GM12878 (cell line): ENCODE measurements at regions of chr12 and their contacts with region 1.

Region 1: DNA sequence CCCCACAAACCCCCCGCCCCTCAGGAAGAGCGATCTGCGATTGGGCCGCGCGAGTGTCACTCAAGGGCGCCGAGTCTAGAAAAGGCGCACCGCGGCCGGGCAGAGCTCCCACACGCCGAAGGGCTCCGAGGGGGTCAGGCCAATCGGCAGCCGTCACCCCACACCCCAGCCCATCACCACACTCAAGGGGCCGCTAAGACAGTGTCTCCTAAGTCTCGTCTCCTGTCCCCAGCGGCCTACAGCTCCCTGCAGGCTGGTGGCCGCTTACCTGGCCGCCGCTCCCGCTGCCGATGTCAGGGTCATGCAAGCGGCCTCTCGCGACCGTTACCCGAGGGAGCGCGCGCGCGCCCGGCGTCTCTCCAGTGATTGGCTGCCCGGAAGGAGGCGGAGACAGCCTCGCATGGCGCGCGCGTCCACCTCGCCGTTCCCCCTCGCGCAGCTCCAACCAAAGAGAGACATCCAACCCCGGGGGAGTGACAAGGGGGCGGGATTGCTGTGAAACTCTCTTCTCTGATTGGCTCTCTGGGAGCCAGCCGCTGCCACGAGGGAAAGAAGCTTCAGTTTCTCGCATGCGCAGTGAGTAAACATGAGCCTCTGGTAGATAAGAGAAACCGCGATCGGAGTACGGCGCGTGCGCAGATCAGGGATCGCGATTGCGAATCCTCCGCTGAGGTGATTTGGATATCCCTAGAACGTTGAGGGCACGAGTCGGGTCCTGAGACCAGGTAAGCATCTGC is at the starts of genes MPHOSPH9 and MTRFR:
- DNase-seq: peak; percentile 100
- ATAC-seq: peak; percentile 91
- H3K4me3 ChIP-seq: peak within 1 kb of the TSS; percentile 95
- H3K27ac ChIP-seq: peak within 1 kb of the TSS; percentile 90
- H3K4me1 ChIP-seq: peaks cover 24% of the 10 kb centered on the region
- H3K27me3 ChIP-seq: no peaks in the 10 kb centered on the region
- CTCF ChIP-seq: no peak
- EP300 ChIP-seq: peak in 1 of 2 experiments; percentile 41; a peak in 2 of 4 replicates
- POLR2A ChIP-seq: peak; percentile 99
- RAD21 ChIP-seq: no peak
- polyA plus RNA-seq, gene MPHOSPH9: 11.5 to 13.3 TPM
- polyA plus RNA-seq, gene MTRFR: 30.8 to 33.4 TPM

Region 2: DNA sequence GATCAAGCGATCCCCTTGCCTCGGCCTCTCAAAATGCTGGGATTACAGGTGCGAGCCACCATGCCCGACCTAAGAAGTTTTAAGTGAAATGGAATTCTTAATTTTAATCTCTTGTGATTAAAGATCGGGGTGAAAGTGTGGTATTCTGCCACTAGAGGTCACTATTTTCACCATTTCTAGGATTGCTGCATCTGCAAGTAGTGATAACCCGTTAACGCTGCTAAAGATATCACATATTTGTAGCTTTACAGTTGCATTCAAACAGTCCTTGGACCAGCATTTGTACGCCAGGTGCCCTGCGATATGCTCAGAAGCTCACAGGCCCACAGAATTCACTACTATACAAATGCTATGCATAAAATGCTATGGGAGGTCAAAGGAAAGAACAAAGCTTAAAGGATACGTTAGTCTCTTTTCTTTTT is 439.3 kb before region 1 on chr12:
- CTCF ChIA-PET with region 1: interaction called, 14 read pairs
- POLR2A ChIA-PET with region 1: no interaction called
- RAD21 ChIA-PET with region 1: interaction called, 3 read pairs
- SMC1A ChIA-PET with region 1: interaction called, 4 read pairs
- in situ Hi-C with region 1: no loop called
- intact Hi-C with region 1: no loop called
- DNase-seq: no peak
- ATAC-seq: peak; percentile 88
- H3K4me3 ChIP-seq: no peak overlapping the region
- H3K27ac ChIP-seq: no peak overlapping the region
- H3K4me1 ChIP-seq: no peaks in the 10 kb centered on the region
- H3K27me3 ChIP-seq: no peaks in the 10 kb centered on the region
- CTCF ChIP-seq: peak; percentile 53 to 67 (median 64); a peak in 5 of 6 replicates
- EP300 ChIP-seq: no peak
- POLR2A ChIP-seq: no peak
- RAD21 ChIP-seq: peak; percentile 74

Region 3: DNA sequence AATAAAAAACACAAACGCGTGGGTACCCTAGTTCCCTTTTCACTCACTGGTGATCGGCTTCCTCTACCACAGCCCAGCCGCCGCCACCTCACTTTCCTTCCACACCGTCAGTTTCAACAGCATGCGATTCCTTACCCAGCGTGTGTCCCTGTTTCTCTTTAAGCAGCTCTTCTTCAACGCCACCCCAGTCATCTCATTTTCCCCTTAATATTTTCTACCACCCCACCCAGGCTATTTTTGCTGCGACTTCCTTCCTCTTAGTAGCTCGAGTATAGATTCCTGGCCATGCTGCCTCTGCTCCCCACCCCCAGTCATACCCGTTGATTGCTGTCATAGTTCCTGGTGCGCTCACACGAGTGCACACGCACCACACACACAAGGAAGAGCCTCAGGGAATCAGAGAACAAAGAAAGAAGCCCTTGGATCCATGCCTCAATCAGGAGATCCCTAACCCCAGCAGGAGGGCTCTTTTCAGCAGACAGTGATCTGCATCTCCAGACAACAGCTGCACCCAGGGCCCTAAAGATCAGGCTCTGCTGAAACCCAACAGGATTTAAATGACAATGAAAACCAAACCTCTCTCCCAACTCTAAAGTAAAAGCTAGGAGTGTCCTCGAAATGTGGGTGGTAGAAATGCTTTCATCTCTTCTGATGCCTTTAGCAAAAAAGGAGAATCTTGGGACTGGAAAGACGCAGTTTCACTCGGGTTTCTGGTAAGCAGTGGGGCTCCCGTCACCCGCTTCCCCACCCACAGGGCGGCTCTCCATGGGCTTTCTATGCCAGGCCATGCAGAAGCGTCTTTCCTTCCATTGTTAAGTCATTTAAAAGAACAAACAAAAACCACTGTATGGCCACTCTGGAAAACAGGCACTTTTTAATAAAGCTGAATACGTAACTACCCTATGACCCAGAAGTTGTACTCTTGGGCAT is 360.9 kb before region 1 on chr12:
- CTCF ChIA-PET with region 1: interaction called, 5 read pairs
- POLR2A ChIA-PET with region 1: no interaction called
- RAD21 ChIA-PET with region 1: interaction called, 5 read pairs
- SMC1A ChIA-PET with region 1: interaction called, 3 read pairs
- in situ Hi-C with region 1: loop called (anchors 25 kb)
- intact Hi-C with region 1: loop called (anchors 10 kb)
- DNase-seq: peak; percentile 52
- ATAC-seq: peak; percentile 52
- H3K4me3 ChIP-seq: peak overlapping the region; percentile 57; the same call in 1 of the 2 replicates
- H3K27ac ChIP-seq: peak overlapping the region; percentile 64
- H3K4me1 ChIP-seq: peaks cover 45% of the 10 kb centered on the region
- H3K27me3 ChIP-seq: no peaks in the 10 kb centered on the region
- CTCF ChIP-seq: no peak
- EP300 ChIP-seq: no peak
- POLR2A ChIP-seq: 0 out of 2 replicates have a peak, but pooled peaks have one; percentile 17
- RAD21 ChIP-seq: no peak

Region 4: DNA sequence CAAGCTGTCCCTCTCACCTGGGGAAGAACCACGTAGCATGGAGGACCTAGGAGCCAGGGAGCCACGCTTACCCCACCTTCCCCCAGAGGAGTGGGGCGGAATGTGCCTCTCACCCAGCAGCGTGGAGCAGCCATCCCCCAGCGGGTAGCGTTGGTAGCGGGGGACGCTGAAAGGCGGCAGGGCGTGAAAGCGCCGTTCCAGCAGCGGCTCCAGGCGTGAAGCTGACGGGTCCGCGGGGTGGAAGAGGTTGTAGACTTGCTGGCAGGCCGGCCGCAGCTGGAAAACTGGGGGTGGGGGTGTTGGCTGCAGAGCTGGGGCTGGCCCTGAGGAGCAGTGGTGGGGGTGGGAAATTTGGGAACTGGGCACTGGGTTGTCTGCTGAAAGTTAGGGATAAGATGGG is 240.6 kb before region 1 on chr12:
- CTCF ChIA-PET with region 1: interaction called, 11 read pairs
- POLR2A ChIA-PET with region 1: no interaction called
- RAD21 ChIA-PET with region 1: interaction called, 4 read pairs
- SMC1A ChIA-PET with region 1: interaction called, 3 read pairs
- in situ Hi-C with region 1: no loop called
- intact Hi-C with region 1: no loop called
- DNase-seq: no peak
- ATAC-seq: no peak
- H3K4me3 ChIP-seq: no peak overlapping the region
- H3K27ac ChIP-seq: no peak overlapping the region
- H3K4me1 ChIP-seq: peaks cover 9% of the 10 kb centered on the region
- H3K27me3 ChIP-seq: no peaks in the 10 kb centered on the region; a peak in 1 of 4 replicates
- CTCF ChIP-seq: no peak
- EP300 ChIP-seq: no peak
- POLR2A ChIP-seq: no peak
- RAD21 ChIP-seq: no peak

Region 5: GRCh38 chr12:123137039-123137438 is 95.9 kb before region 1 on chr12:
- CTCF ChIA-PET with region 1: no interaction called
- POLR2A ChIA-PET with region 1: no interaction called
- RAD21 ChIA-PET with region 1: no interaction called
- SMC1A ChIA-PET with region 1: no interaction called
- in situ Hi-C with region 1: no loop called
- intact Hi-C with region 1: no loop called
- DNase-seq: no peak
- ATAC-seq: no peak
- H3K4me3 ChIP-seq: no peak overlapping the region
- H3K27ac ChIP-seq: no peak overlapping the region
- H3K4me1 ChIP-seq: no peaks in the 10 kb centered on the region
- H3K27me3 ChIP-seq: no peaks in the 10 kb centered on the region
- CTCF ChIP-seq: no peak
- EP300 ChIP-seq: no peak
- POLR2A ChIP-seq: no peak
- RAD21 ChIP-seq: no peak

Region 6: DNA sequence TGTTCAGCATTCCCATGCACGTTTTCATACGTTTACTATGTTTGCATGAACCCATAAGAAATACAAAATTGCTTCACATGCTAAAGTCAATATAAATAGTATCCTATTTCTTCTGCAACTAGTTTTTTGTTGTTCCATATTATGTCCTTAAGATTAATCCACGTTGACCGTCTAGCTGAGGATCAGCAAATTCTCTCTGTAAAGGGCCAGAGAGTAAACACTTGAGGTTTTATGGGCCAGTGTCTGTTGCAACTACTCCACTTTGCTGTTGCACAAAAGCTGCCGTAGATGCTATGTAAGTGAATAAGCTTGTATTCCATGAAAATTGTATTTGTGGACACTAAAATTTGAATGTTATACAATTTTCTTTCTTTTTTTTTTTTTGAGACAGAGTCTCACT is 61.0 kb before region 1 on chr12:
- CTCF ChIA-PET with region 1: interaction called, 11 read pairs
- POLR2A ChIA-PET with region 1: no interaction called
- RAD21 ChIA-PET with region 1: interaction called, 4 read pairs
- SMC1A ChIA-PET with region 1: no interaction called
- in situ Hi-C with region 1: no loop called
- intact Hi-C with region 1: no loop called
- DNase-seq: no peak
- ATAC-seq: no peak
- H3K4me3 ChIP-seq: no peak overlapping the region
- H3K27ac ChIP-seq: no peak overlapping the region
- H3K4me1 ChIP-seq: no peaks in the 10 kb centered on the region
- H3K27me3 ChIP-seq: no peaks in the 10 kb centered on the region
- CTCF ChIP-seq: no peak
- EP300 ChIP-seq: no peak
- POLR2A ChIP-seq: no peak
- RAD21 ChIP-seq: no peak

Region 7: GRCh38 chr12:123365025-123365917 is 132.3 kb after region 1 on chr12:
- CTCF ChIA-PET with region 1: interaction called, 7 read pairs
- POLR2A ChIA-PET with region 1: interaction called, 12 read pairs
- RAD21 ChIA-PET with region 1: interaction called, 10 read pairs
- SMC1A ChIA-PET with region 1: interaction called, 7 read pairs
- in situ Hi-C with region 1: no loop called
- intact Hi-C with region 1: loop called (anchors 2 kb)
- DNase-seq: peak; percentile 98
- ATAC-seq: peak; percentile 82
- H3K4me3 ChIP-seq: peak overlapping the region; percentile 61; the same call in 1 of the 2 replicates
- H3K27ac ChIP-seq: peak overlapping the region; percentile 99
- H3K4me1 ChIP-seq: peaks cover 10% of the 10 kb centered on the region
- H3K27me3 ChIP-seq: no peaks in the 10 kb centered on the region
- CTCF ChIP-seq: peak; percentile 76 to 89 (median 82)
- EP300 ChIP-seq: peak; percentile 99
- POLR2A ChIP-seq: peak; percentile 87
- RAD21 ChIP-seq: peak; percentile 66

Region 8: DNA sequence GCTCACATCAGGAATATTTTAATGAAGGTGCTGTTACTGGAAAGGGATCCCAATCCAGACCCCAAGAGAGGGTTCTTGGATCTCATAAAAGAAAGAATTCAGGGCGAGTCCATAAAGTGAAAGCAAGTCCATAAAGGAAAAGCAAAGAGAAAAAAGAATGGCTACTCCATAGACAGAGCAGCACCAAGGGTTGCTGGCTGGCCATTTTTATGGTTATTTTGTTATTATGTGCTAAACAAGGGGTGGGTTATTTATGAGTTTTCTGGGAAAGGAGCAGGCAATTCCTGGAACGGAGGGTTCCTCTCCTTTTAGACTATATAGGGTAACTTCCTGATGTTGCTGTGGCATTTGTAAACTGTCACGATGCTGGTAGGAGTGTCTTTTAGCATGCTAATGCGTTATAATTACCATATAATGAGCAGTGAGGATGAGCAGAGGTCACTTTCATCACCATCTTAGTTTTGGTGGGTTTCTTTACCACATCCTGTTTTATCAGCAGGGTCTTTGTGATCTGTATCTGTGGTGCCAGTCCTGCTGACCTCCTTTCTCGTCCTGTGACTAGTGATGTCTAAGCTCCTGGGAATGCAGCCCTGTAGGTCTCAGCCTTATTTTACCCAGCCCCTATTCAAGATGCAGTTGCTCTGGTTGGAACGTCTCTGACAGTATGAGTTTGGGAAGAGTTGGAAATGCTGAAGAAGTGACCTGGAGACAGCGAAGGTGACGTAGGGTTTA is 840.5 kb after region 1 on chr12:
- CTCF ChIA-PET with region 1: no interaction called
- POLR2A ChIA-PET with region 1: no interaction called
- RAD21 ChIA-PET with region 1: no interaction called
- SMC1A ChIA-PET with region 1: no interaction called
- in situ Hi-C with region 1: no loop called
- intact Hi-C with region 1: no loop called
- DNase-seq: no peak
- ATAC-seq: no peak
- H3K4me3 ChIP-seq: no peak overlapping the region
- H3K27ac ChIP-seq: no peak overlapping the region
- H3K4me1 ChIP-seq: no peaks in the 10 kb centered on the region
- H3K27me3 ChIP-seq: no peaks in the 10 kb centered on the region
- CTCF ChIP-seq: no peak
- EP300 ChIP-seq: no peak
- POLR2A ChIP-seq: no peak
- RAD21 ChIP-seq: no peak